ENCODE measurements at regions of chr1 and their contacts with region 1.

Region 1: DNA sequence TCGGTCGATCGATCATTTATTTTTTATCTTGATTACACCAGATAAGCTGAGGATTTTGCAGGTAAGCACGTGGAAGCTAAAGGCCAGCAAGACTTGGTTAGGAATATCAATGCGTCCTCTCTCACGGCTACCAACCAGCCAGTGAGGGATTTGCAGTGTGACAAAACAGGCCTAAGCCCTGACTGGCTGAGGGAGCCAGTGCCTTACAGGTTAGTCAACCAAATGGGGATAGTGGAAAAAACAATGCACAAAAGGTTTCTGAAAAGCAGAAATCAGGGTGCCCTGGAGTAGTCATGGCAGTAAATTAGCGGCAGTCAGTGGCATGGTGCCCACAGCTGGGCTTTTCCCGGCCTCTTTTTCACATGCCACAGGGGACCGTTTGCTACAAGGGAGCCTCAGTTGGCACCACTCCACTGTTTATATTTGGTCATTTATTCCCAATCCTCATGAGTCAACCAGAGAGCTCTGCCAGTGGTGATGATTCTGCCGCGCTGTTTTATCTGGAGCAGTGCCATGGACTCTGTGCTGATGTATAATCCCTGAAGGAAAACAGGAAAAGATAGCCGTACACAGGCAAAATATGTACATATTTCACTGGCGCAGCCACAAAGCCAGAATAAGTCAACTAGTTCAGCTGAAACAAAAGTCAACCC is 167.6 kb downstream of the RHOU start:
- DNase-seq: peak; percentile 92
- H3K4me3 ChIP-seq: no peak overlapping the region
- H3K27ac ChIP-seq: no peak overlapping the region
- H3K4me1 ChIP-seq: peaks cover 6% of the 10 kb centered on the region
- H3K27me3 ChIP-seq: peaks cover 15% of the 10 kb centered on the region
- CTCF ChIP-seq: no peak

Region 2: DNA sequence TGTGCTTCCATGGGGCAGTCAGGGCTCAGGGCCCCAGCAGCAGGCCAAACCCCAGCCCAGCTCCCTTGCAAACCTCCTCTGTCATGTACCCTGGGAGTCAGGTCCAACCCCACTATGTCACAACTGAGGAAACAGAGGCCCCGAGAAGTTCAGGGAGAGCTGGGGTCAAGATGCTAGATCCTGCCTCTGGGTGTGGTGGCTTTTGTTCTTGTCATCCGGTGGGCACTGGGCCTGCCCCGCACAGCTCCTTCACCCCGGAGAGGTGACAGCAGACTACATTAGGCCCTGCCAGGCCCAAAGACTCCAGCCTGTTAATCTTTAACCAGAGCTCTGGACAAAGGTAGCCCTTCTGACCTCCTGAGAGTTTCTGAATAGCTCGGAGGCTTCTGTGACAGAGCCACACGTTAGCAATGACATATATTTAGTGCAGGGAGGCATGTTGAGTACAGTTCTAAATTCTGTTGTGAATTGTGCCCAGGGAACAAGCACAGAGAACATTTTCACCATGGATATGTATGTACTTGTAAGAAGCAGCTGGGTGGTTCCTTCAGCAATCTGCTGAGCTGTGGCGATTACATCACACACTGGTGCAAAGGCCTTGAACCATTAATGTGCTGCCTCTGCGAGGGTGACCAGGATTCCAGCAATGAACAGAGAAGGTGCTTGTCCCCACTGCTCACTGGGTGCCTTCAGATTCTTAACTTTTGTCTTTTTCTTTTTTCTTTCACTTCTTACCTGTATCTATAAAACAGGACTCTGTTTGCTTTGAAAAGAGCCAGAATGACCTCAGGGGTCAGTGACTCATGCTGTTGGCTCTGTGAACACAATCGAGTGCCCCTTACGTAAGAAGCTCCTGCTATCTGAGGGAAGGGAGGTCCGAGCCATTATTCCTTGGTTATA is 64.8 kb before region 1 on chr1:
- CTCF ChIA-PET with region 1: no interaction called
- dilution Hi-C with region 1: no loop called
- in situ Hi-C with region 1: no loop called
- intact Hi-C with region 1: loop called (anchors 2 kb)
- DNase-seq: peak; percentile 94
- H3K4me3 ChIP-seq: no peak overlapping the region
- H3K27ac ChIP-seq: peak overlapping the region; percentile 22
- H3K4me1 ChIP-seq: peaks cover 20% of the 10 kb centered on the region
- H3K27me3 ChIP-seq: peaks cover 19% of the 10 kb centered on the region
- CTCF ChIP-seq: no peak

Region 3: DNA sequence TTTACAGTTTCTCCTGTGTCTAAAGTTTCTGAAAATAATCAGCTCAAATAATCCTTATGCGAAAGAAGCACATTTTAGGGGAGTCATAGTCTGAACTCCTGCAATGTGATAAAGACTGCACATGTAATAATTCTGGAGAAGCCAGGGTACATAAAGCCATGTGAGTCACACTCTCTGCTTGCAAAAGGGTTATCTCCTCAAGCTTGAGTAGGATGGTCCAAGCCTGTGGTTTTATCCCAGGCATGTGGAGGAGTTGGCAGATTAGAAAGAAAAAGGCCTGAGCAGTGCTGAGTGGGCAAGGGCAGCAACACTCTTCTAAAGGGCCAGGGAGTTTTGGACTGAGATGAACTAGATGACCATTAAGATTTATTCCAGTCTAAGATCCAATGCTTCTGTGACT is 52.8 kb after region 1 on chr1:
- CTCF ChIA-PET with region 1: no interaction called
- dilution Hi-C with region 1: no loop called
- in situ Hi-C with region 1: no loop called
- intact Hi-C with region 1: no loop called
- DNase-seq: no peak
- H3K4me3 ChIP-seq: no peak overlapping the region
- H3K27ac ChIP-seq: no peak overlapping the region
- H3K4me1 ChIP-seq: no peaks in the 10 kb centered on the region
- H3K27me3 ChIP-seq: peaks cover 2% of the 10 kb centered on the region
- CTCF ChIP-seq: no peak

Region 4: GRCh38 chr1:229035054-229035747 is 132.3 kb after region 1 on chr1:
- CTCF ChIA-PET with region 1: no interaction called
- dilution Hi-C with region 1: no loop called
- in situ Hi-C with region 1: no loop called
- intact Hi-C with region 1: no loop called
- DNase-seq: no peak
- H3K4me3 ChIP-seq: no peak overlapping the region
- H3K27ac ChIP-seq: no peak overlapping the region
- H3K4me1 ChIP-seq: peaks cover 4% of the 10 kb centered on the region
- H3K27me3 ChIP-seq: no peaks in the 10 kb centered on the region
- CTCF ChIP-seq: no peak

Region 5: DNA sequence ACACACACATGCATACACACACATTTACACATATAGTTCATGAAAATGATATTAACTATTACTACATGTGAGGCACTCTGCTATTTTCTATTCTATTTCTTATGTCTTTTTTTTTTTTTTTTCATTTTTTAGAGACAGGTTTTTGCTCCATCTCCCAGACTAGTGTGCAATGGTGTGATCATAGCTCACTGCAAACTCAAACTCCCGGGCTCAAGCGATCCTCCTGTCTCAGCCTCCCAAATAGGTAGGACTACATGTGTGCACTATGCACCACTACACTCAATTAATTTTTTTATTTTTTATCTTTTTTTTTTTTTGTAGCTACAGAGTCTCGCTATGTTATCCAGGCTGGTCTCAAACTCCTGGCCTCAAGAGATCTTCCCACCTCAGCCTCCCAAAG is 319.2 kb after region 1 on chr1:
- CTCF ChIA-PET with region 1: interaction called, 19 read pairs
- dilution Hi-C with region 1: no loop called
- in situ Hi-C with region 1: no loop called
- intact Hi-C with region 1: no loop called
- DNase-seq: no peak
- H3K4me3 ChIP-seq: no peak overlapping the region
- H3K27ac ChIP-seq: no peak overlapping the region
- H3K4me1 ChIP-seq: peaks cover 29% of the 10 kb centered on the region
- H3K27me3 ChIP-seq: no peaks in the 10 kb centered on the region
- CTCF ChIP-seq: no peak

Region 6: GRCh38 chr1:229238674-229239415 is 335.9 kb after region 1 on chr1:
- CTCF ChIA-PET with region 1: no interaction called
- dilution Hi-C with region 1: no loop called
- in situ Hi-C with region 1: no loop called
- intact Hi-C with region 1: no loop called
- DNase-seq: peak; percentile 62
- H3K4me3 ChIP-seq: no peak overlapping the region
- H3K27ac ChIP-seq: peak overlapping the region; percentile 87
- H3K4me1 ChIP-seq: peaks cover 17% of the 10 kb centered on the region
- H3K27me3 ChIP-seq: no peaks in the 10 kb centered on the region
- CTCF ChIP-seq: no peak

Measured in mammary epithelial cell (primary cell).